Dorsolateral prefrontal cortex (tissue), 120 donors: ENCODE measurements at regions of chr1 and their contacts with region 1.

Region 1: GRCh38 chr1:23634842-23635651 is 56.6 kb upstream of the RPL11 start:
- DNase-seq: peak in 6 of 10 donors; percentile 13 to 61 (median 38)
- H3K4me3 ChIP-seq: peak overlapping the region in 58 of 59 donors; percentile 6 to 66 (median 47)
- H3K27ac ChIP-seq: peak overlapping the region in 52 of 59 donors; percentile 10 to 90 (median 68)
- H3K27me3 ChIP-seq: no peaks in the 10 kb centered on the region
- CTCF ChIP-seq: peak; percentile 71 to 96 (median 90)

Region 2: DNA sequence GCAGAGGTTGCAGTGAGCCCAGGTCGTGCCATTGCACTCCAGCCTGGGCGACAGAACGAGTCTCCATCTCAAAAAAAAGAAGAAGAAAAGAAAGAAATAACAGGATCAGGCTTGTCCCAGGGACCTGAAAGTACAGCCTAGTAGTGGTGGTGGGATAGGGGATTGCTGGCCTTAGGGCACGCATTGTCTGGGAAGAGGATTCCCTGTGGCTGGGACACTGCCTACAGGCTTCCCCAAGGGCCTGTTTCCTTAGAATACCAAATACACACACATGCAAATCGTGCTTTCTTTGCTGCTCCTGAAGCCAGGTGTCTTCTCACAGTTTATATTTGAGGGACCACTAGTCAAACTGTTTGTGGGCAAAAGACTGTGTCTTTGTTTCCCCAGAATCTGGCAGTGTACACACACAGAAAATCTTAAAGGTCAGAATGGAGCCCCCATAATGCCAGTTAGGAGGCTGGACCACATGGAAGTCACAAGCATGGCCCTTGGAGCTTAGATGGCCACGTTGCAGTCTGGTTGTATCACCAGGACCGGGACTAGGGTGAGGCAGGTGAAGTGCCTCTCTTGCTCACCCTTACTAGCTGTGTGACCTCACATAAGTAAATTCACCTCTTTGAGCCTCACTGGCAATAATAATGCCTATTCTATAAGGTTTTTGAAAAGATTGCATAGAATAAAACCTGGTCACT is 138.4 kb before region 1 on chr1:
- intact Hi-C with region 1: loop called (anchors 5 kb)
- DNase-seq: no peak
- H3K4me3 ChIP-seq: no peak overlapping the region
- H3K27ac ChIP-seq: no peak overlapping the region
- H3K27me3 ChIP-seq: no peaks in the 10 kb centered on the region
- CTCF ChIP-seq: no peak